ENCODE measurements at regions of chr19 and their contacts with region 1.

Region 1: GRCh38 chr19:9584073-9584833 is at the start of gene ZNF121:
- DNase-seq: peak; percentile 77
- H3K4me3 ChIP-seq: peak within 1 kb of the TSS; percentile 90 to 100 (median 97)
- H3K27ac ChIP-seq: peak within 1 kb of the TSS; percentile 94
- H3K4me1 ChIP-seq: no peaks in the 10 kb centered on the region
- H3K27me3 ChIP-seq: no peaks in the 10 kb centered on the region
- CTCF ChIP-seq: no peak
- total RNA-seq, gene ZNF121: 62.4 to 70.5 TPM

Region 2: GRCh38 chr19:9140159-9140874 is 443.9 kb before region 1 on chr19 and contains the start of gene ZNF317:
- CTCF ChIA-PET with region 1: no interaction called
- dilution Hi-C with region 1: no loop called
- in situ Hi-C with region 1: no loop called
- intact Hi-C with region 1: loop called (anchors 1 kb)
- DNase-seq: peak; percentile 85
- H3K4me3 ChIP-seq: peak within 1 kb of the TSS; percentile 80 to 83 (median 80)
- H3K27ac ChIP-seq: peak within 1 kb of the TSS; percentile 83
- H3K4me1 ChIP-seq: peaks cover 6% of the 10 kb centered on the region
- H3K27me3 ChIP-seq: no peaks in the 10 kb centered on the region
- CTCF ChIP-seq: no peak
- total RNA-seq, gene ZNF317: 26.3 to 36.3 TPM

Region 3: GRCh38 chr19:9309139-9309973 is 274.9 kb before region 1 on chr19 and contains the start of gene ZNF699:
- CTCF ChIA-PET with region 1: no interaction called
- dilution Hi-C with region 1: no loop called
- in situ Hi-C with region 1: no loop called
- intact Hi-C with region 1: loop called (anchors 1 kb)
- DNase-seq: peak; percentile 96
- H3K4me3 ChIP-seq: peak within 1 kb of the TSS; percentile 77 to 82 (median 80)
- H3K27ac ChIP-seq: peak within 1 kb of the TSS; percentile 86
- H3K4me1 ChIP-seq: peaks cover 4% of the 10 kb centered on the region
- H3K27me3 ChIP-seq: no peaks in the 10 kb centered on the region
- CTCF ChIP-seq: no peak
- total RNA-seq, gene ZNF699: 11.6 to 69.2 TPM

Region 4: DNA sequence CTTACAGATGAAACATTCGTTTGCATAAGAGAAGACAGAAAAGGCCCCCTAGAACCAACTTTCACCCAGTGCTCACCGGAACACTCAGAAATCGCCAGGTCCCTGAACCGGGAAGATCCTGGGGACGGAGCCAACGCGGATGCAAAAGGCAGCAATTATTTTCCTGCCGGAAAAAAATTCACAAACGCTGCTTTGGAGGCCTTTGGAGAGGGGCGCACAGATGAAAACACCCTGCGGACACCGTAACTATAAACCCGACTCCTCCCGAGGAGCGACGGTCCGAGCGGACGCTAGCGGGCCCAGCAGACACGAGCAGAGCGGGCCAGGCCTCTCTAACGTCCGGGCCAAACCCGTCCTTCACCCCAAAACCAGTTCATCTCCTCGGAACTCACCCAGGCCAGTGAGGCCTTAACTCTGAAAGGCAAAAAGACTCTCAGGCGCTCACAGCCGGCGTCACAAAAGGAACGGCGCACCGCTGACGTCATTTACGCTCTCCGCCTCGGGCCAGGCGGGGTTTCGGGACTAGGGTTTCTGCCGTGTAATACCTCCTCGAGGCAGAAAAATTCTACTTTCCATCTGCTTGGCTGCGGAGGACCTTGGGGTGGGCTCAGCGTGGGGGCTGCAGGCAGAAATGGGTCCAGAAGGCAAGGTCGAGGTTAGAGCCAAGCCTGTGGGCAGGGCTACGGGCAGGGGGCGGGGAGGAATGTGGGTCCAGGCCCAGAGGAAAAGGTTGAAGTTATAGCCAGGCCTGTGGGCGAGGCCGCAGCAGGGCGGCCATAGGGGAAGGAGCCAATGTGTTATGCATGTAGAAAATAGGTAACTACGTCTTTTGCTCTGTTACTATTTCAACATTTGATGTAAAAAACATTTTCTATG is 45.8 kb before region 1 on chr19 and contains the start of gene ZNF426:
- CTCF ChIA-PET with region 1: no interaction called
- dilution Hi-C with region 1: no loop called
- in situ Hi-C with region 1: no loop called
- intact Hi-C with region 1: loop called (anchors 1 kb)
- DNase-seq: peak; percentile 88
- H3K4me3 ChIP-seq: peak within 1 kb of the TSS; percentile 60 to 89 (median 69)
- H3K27ac ChIP-seq: peak within 1 kb of the TSS; percentile 93
- H3K4me1 ChIP-seq: peaks cover 3% of the 10 kb centered on the region
- H3K27me3 ChIP-seq: no peaks in the 10 kb centered on the region
- CTCF ChIP-seq: no peak
- total RNA-seq, gene ZNF426: 16.2 to 28.0 TPM

Region 5: DNA sequence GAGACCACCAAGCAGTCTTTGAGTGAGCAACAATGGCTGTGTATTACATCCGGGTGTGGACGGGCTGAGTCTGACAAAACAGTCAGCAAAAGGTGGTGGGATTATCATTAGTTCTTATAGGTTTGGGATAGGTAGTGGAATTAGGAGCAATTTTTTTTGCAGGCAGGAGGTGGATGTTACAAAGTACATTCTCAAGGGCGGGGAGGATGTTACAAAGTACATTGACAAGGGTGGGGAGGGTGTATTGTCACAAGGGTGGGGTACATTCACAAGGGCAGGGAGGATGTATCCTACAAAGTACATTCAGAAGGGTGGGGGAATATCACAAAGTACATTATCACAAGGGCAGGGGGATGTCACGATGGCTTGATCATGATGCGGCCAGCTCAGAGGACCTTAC is 51.8 kb after region 1 on chr19:
- CTCF ChIA-PET with region 1: no interaction called
- dilution Hi-C with region 1: loop called (anchors 5 kb)
- in situ Hi-C with region 1: no loop called
- intact Hi-C with region 1: no loop called
- DNase-seq: no peak
- H3K4me3 ChIP-seq: no peak overlapping the region
- H3K27ac ChIP-seq: no peak overlapping the region
- H3K4me1 ChIP-seq: no peaks in the 10 kb centered on the region
- H3K27me3 ChIP-seq: no peaks in the 10 kb centered on the region
- CTCF ChIP-seq: no peak

Region 6: GRCh38 chr19:9785367-9786331 is 201.4 kb after region 1 on chr19:
- CTCF ChIA-PET with region 1: no interaction called
- dilution Hi-C with region 1: no loop called
- in situ Hi-C with region 1: no loop called
- intact Hi-C with region 1: loop called (anchors 1 kb)
- DNase-seq: peak; percentile 93
- H3K4me3 ChIP-seq: peak overlapping the region; percentile 66 to 74 (median 71)
- H3K27ac ChIP-seq: peak overlapping the region; percentile 73
- H3K4me1 ChIP-seq: no peaks in the 10 kb centered on the region
- H3K27me3 ChIP-seq: no peaks in the 10 kb centered on the region
- CTCF ChIP-seq: no peak

Measured in mammary epithelial cell (primary cell).